ENCODE measurements at regions of chr6 and their contacts with region 1.

Region 1: GRCh38 chr6:57221936-57222742 is at the start of gene RAB23:
- DNase-seq: peak; percentile 91
- H3K4me3 ChIP-seq: peak within 1 kb of the TSS; percentile 75 to 96 (median 90)
- H3K27ac ChIP-seq: peak within 1 kb of the TSS; percentile 33
- H3K4me1 ChIP-seq: peaks cover 11% of the 10 kb centered on the region
- H3K27me3 ChIP-seq: no peaks in the 10 kb centered on the region
- CTCF ChIP-seq: no peak
- POLR2A ChIP-seq: peak; percentile 84
- total RNA-seq, gene RAB23: 8.8 and 9.4 TPM in 2 replicates

Region 2: DNA sequence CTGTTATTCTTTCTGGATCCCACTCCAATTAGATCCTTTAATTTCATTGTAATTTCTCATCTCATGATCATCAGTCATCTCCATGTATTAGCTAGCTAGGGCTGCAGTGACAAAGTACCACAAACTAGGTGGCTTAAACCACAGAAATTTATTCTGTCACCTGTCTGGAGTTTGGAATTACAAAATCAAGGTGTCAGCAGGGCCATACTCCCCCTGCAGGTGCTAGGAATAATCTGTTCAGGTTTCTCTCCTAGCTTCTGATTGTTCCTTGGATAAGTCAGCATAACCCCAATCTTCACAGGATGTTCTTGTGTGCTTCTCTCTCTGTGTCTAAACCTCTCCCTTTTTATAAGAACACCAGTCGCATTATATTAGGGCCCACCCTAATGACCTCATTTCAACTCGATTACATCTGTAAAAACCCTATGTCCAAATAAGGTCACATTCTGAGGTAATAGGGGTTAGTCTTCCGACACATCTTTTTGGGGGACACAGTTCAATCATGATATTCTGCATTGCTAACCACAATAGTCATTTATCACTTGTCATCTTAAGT is 226.7 kb before region 1 on chr6:
- CTCF ChIA-PET with region 1: no interaction called
- POLR2A ChIA-PET with region 1: no interaction called
- dilution Hi-C with region 1: no loop called
- intact Hi-C with region 1: no loop called
- DNase-seq: no peak
- H3K4me3 ChIP-seq: no peak overlapping the region
- H3K27ac ChIP-seq: no peak overlapping the region
- H3K4me1 ChIP-seq: no peaks in the 10 kb centered on the region
- H3K27me3 ChIP-seq: peaks cover 0 to 3% of the 10 kb centered on the region in 2 experiments
- CTCF ChIP-seq: no peak
- POLR2A ChIP-seq: no peak

Region 3: DNA sequence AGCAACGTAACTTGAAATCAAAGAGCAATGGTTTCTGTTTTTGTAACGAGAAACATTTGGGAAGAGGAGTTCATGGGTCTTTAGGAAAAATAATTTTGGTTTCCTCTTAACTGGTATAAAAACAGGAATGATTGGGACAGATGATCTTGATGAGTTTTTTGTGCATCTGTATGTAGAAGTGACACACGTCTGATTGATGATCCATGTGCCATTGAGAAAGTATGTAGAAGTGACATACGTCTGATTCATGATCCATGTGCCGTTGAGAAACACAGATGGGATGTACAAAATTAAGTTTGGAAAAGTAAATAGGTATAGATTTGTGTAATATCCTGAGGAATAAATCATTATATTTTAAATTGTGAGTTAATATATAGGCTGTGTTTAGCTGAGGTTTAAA is 173.6 kb before region 1 on chr6:
- CTCF ChIA-PET with region 1: no interaction called
- POLR2A ChIA-PET with region 1: no interaction called
- dilution Hi-C with region 1: no loop called
- intact Hi-C with region 1: loop called (anchors 1 kb)
- DNase-seq: no peak
- H3K4me3 ChIP-seq: no peak overlapping the region
- H3K27ac ChIP-seq: no peak overlapping the region
- H3K4me1 ChIP-seq: peaks cover 10% of the 10 kb centered on the region
- H3K27me3 ChIP-seq: peaks cover 1 to 4% of the 10 kb centered on the region in 2 experiments
- CTCF ChIP-seq: no peak
- POLR2A ChIP-seq: no peak

Region 4: DNA sequence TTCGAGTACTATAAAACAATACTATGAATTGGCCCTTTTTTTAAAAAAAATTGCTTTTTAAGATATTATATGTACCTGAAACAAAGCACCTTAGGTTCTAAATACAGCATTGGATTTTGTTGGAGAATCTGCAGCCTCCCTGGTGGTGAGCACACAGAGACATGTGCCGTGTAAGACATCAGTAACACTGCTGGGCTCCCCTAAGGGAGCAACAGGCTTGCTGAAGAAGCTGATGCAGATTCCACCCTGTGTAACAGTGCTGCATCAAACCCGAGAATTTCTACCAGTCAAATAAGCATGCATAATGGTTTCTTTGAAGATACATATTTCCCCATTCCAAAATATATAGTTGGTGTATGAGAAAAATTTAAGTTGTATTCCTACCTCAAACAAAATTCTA is 158.3 kb before region 1 on chr6:
- CTCF ChIA-PET with region 1: no interaction called
- POLR2A ChIA-PET with region 1: no interaction called
- dilution Hi-C with region 1: no loop called
- intact Hi-C with region 1: no loop called
- DNase-seq: no peak
- H3K4me3 ChIP-seq: no peak overlapping the region
- H3K27ac ChIP-seq: no peak overlapping the region
- H3K4me1 ChIP-seq: no peaks in the 10 kb centered on the region
- H3K27me3 ChIP-seq: no peaks in the 10 kb centered on the region
- CTCF ChIP-seq: no peak
- POLR2A ChIP-seq: no peak

Region 5: DNA sequence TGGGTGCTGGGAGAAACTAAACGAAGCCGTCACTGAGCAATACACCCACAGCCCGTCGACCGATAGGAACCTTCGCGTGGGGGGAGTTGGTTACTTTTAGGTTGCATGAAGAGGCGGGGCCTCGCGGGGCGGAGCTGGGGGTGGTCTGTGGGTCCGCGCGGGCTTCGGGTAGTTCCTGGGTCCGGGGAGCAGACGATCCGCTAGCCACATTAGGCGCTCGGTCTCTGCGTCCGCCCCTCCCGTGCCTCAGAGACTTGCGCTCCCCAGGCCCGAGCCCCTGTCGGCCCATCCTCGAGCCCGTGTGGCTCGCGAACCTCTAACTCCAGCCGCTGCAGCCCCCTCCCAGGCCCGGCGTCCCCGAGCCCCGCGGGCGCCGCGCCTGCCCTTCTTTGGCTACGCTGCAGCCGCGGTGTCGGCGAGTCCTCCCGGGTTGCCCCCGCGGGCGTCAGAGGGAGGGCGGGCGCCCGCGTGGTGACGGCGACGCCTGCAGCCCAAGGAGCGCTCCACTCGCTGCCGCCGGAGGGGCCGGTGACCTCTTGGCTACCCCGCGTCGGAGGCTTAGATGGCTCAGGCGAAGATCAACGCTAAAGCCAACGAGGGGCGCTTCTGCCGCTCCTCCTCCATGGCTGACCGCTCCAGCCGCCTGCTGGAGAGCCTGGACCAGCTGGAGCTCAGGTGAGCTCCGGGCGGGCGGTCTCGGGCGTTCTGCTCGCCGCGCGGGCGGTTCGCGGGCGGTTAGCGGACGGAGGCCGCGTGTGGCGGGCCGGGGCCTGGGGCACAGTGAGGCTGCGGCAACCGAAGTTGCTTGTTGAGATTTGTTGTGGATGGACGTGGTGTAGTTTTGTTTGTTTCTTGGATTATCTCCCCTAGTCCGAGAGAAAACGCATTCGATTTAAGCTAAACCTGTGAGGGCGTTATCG is 49.7 kb before region 1 on chr6 and contains the start of gene BAG2:
- CTCF ChIA-PET with region 1: interaction called, 4 read pairs
- POLR2A ChIA-PET with region 1: no interaction called
- dilution Hi-C with region 1: no loop called
- intact Hi-C with region 1: loop called (anchors 1 kb)
- DNase-seq: peak; percentile 80
- H3K4me3 ChIP-seq: peak within 1 kb of the TSS; percentile 71 to 79 (median 72)
- H3K27ac ChIP-seq: peak within 1 kb of the TSS; percentile 32
- H3K4me1 ChIP-seq: peaks cover 11% of the 10 kb centered on the region
- H3K27me3 ChIP-seq: no peaks in the 10 kb centered on the region
- CTCF ChIP-seq: peak in 1 of 2 donors; percentile 32
- POLR2A ChIP-seq: peak; percentile 28
- total RNA-seq, gene BAG2: 3.6 and 3.9 TPM in 2 replicates

Region 6: DNA sequence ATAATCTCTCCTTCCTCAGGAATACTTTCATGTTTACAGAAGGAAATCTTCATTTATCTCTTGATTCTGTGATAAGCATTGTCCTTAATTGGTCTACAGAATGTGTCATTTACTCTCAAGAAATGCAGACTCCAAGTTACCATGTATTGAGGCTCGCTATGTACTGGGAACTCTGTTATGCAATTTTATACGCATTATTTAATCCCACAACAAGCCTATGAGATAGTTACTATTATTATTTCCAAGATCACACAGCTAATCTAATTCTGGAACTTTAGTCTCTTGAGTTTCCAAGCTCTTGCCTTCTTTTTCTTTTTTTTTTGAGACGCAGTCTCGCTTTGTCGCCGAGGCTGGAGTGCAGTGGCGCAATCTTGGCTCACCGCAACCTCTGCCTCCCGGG is 30.0 kb after region 1 on chr6:
- CTCF ChIA-PET with region 1: no interaction called
- POLR2A ChIA-PET with region 1: no interaction called
- dilution Hi-C with region 1: no loop called
- intact Hi-C with region 1: no loop called
- DNase-seq: no peak
- H3K4me3 ChIP-seq: no peak overlapping the region
- H3K27ac ChIP-seq: no peak overlapping the region
- H3K4me1 ChIP-seq: no peaks in the 10 kb centered on the region
- H3K27me3 ChIP-seq: no peaks in the 10 kb centered on the region
- CTCF ChIP-seq: no peak
- POLR2A ChIP-seq: no peak

Region 7: DNA sequence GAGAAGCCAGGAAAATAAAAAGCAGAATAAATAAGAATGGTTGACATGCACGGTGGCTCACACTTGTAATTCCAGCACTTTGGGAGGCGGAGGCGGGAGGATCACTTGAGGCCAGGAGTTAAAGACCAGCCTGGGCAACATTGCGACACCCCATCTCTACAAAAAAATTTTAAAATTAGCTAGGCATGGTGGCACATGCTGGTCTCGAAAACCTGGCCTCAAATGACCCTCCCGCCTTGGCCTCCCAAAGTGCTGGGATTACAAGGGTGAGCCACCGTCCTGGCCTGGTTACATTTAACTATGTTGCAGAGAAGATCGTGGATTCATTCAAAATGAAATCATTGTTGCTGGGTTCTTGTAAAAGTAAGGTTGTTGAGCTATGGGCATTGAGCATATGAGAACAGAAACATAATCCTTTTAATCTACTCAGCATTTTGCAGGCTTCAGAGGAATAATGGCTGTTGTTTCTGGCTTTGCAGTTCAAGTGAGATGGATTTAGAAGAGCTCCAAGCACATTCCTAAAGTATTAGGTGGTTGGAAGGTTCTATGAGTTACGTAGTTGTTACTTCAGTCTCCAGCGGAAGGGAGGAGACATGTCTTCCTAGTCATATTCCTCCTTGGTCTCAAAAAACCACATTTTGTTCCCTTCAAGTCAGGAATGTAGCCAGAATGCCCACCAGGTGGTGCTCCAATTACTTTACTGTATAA is 45.6 kb after region 1 on chr6:
- CTCF ChIA-PET with region 1: interaction called, 16 read pairs
- POLR2A ChIA-PET with region 1: no interaction called
- dilution Hi-C with region 1: no loop called
- intact Hi-C with region 1: no loop called
- DNase-seq: peak; percentile 86
- H3K4me3 ChIP-seq: no peak overlapping the region
- H3K27ac ChIP-seq: peak overlapping the region; percentile 35
- H3K4me1 ChIP-seq: peaks cover 22% of the 10 kb centered on the region
- H3K27me3 ChIP-seq: no peaks in the 10 kb centered on the region
- CTCF ChIP-seq: peak; percentile 49 to 57
- POLR2A ChIP-seq: no peak

Measured in endothelial cell of umbilical vein (primary cell).